ENCODE measurements at regions of chr6 and their contacts with region 1.

Region 1: DNA sequence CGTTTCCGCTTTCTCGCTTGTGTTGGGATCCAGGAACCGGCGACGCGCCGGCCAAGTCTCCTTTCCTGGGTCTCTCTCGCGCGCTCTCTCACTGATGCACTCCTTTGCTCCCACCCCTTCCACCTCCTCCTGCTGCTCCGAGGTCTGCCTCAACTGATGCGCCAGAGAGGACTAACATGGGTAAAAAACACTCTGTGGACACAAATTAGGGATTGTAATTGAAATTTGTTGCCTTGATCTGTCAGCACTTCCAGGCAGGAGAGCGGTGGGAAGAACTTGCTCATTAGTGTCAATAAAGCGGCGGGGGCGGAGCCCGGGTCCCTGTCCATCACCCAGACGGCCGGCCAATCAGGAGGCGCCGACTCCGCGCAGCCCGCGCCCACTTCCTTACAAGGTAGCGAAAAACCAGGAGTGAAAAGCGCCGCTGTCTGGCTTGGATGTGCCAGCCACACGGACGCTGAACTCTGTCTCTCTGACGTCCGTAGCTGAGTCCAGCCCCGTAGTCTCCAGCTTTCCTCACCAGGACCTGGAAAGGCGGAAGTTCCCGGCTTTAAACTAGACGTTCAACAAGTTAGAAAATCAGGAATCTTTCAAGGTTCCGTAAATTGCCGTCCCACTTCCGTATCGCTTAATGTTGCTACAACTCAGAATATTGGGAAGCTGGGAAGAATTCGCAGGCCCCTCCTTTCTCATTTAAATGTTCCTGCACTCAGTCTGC is at the start of gene TBX18:
- DNase-seq: no peak
- H3K4me3 Mint-ChIP-seq: peak within 1 kb of the TSS; percentile 46
- H3K27ac Mint-ChIP-seq: peak within 1 kb of the TSS; percentile 12
- H3K4me1 Mint-ChIP-seq: peaks cover 7% of the 10 kb centered on the region
- H3K27me3 Mint-ChIP-seq: peaks cover 74% of the 10 kb centered on the region
- total RNA-seq, gene TBX18: not detected in 2 replicates

Region 2: GRCh38 chr6:83708970-83709747 is 1055.3 kb before region 1 on chr6 and contains the start of gene SNAP91:
- intact Hi-C with region 1: loop called (anchors 5 kb)
- DNase-seq: no peak
- H3K4me3 Mint-ChIP-seq: peak within 1 kb of the TSS; percentile 47
- H3K27ac Mint-ChIP-seq: no peak within 1 kb of the TSS
- H3K4me1 Mint-ChIP-seq: no peaks in the 10 kb centered on the region
- H3K27me3 Mint-ChIP-seq: peaks cover 35% of the 10 kb centered on the region
- total RNA-seq, gene SNAP91: not detected in 2 replicates

Region 3: GRCh38 chr6:84422380-84422968 is 342.0 kb before region 1 on chr6:
- intact Hi-C with region 1: loop called (anchors 5 kb)
- DNase-seq: peak; percentile 9
- H3K4me3 Mint-ChIP-seq: no peak overlapping the region
- H3K27ac Mint-ChIP-seq: no peak overlapping the region
- H3K4me1 Mint-ChIP-seq: no peaks in the 10 kb centered on the region
- H3K27me3 Mint-ChIP-seq: peaks cover 3% of the 10 kb centered on the region

Region 4: GRCh38 chr6:84779917-84780316 is 15.4 kb after region 1 on chr6:
- intact Hi-C with region 1: no loop called
- DNase-seq: no peak
- H3K4me3 Mint-ChIP-seq: no peak overlapping the region
- H3K27ac Mint-ChIP-seq: no peak overlapping the region
- H3K4me1 Mint-ChIP-seq: no peaks in the 10 kb centered on the region
- H3K27me3 Mint-ChIP-seq: peaks cover 25% of the 10 kb centered on the region

Region 5: GRCh38 chr6:84798257-84798656 is 33.8 kb after region 1 on chr6:
- intact Hi-C with region 1: no loop called
- DNase-seq: no peak
- H3K4me3 Mint-ChIP-seq: no peak overlapping the region
- H3K27ac Mint-ChIP-seq: no peak overlapping the region
- H3K4me1 Mint-ChIP-seq: no peaks in the 10 kb centered on the region
- H3K27me3 Mint-ChIP-seq: no peaks in the 10 kb centered on the region

Measured in activated T-helper 2 cell treated with anti-CD3 and anti-CD28 coated beads, Interferon-gamma antibody, Interleukin-2, Interleukin-4, amounts not matched to agents 10 μg/mL and 5 μg/mL and 100 μg/mL, durations not matched to agents 14 hours and 24 hours and 36 hours (primary cell).